CD8-positive, alpha-beta T cell (primary cell): ENCODE measurements at regions of chr2 and their contacts with region 1.

Region 1: DNA sequence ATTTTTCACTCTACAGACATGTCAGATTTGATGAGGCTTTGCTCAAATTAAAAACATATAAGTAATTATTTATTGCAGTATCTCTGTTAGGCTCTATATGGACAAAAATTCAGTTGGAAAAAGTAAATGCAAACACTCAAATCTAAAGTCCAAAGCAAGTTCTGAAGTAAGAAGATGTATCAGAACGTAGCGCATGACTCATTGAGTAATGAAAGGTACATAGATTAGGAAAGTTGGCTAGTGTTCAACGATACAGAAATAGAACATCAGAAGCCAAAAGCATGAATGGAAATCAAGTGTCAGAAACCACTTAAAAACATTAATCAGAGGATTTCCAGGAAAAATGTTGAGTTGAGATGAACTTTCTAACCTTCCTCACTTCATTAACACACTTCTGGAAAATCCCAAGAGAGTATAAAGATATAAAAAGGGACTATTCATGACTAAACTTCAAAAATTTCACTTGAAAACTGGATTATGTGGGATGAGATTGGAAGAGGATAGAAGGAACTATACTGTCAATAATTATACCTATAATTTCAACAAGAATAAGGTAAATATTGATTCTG is 494.1 kb downstream of the LRRTM4 start:
- DNase-seq: no peak
- ATAC-seq: no peak
- H3K4me3 ChIP-seq: no peak overlapping the region
- H3K4me3 Mint-ChIP-seq: no peak overlapping the region
- H3K27ac ChIP-seq: no peak overlapping the region
- H3K27ac Mint-ChIP-seq: no peak overlapping the region
- H3K4me1 ChIP-seq: no peaks in the 10 kb centered on the region
- H3K4me1 Mint-ChIP-seq: no peaks in the 10 kb centered on the region
- H3K27me3 ChIP-seq: no peaks in the 10 kb centered on the region
- H3K27me3 Mint-ChIP-seq: no peaks in the 10 kb centered on the region
- CTCF ChIP-seq: no peak

Region 2: GRCh38 chr2:77001895-77002294 is 26.2 kb before region 1 on chr2:
- CTCF ChIA-PET with region 1: no interaction called
- POLR2A ChIA-PET with region 1: no interaction called
- intact Hi-C with region 1: loop called in 1 of 2 experiments (anchors 2 kb)
- DNase-seq: no peak
- ATAC-seq: no peak
- H3K4me3 ChIP-seq: no peak overlapping the region
- H3K4me3 Mint-ChIP-seq: no peak overlapping the region
- H3K27ac ChIP-seq: no peak overlapping the region
- H3K27ac Mint-ChIP-seq: no peak overlapping the region
- H3K4me1 ChIP-seq: no peaks in the 10 kb centered on the region
- H3K4me1 Mint-ChIP-seq: no peaks in the 10 kb centered on the region
- H3K27me3 ChIP-seq: no peaks in the 10 kb centered on the region
- H3K27me3 Mint-ChIP-seq: no peaks in the 10 kb centered on the region
- CTCF ChIP-seq: no peak